RWPE1 (cell line): ENCODE measurements at regions of chr9 and their contacts with region 1.

Region 1: DNA sequence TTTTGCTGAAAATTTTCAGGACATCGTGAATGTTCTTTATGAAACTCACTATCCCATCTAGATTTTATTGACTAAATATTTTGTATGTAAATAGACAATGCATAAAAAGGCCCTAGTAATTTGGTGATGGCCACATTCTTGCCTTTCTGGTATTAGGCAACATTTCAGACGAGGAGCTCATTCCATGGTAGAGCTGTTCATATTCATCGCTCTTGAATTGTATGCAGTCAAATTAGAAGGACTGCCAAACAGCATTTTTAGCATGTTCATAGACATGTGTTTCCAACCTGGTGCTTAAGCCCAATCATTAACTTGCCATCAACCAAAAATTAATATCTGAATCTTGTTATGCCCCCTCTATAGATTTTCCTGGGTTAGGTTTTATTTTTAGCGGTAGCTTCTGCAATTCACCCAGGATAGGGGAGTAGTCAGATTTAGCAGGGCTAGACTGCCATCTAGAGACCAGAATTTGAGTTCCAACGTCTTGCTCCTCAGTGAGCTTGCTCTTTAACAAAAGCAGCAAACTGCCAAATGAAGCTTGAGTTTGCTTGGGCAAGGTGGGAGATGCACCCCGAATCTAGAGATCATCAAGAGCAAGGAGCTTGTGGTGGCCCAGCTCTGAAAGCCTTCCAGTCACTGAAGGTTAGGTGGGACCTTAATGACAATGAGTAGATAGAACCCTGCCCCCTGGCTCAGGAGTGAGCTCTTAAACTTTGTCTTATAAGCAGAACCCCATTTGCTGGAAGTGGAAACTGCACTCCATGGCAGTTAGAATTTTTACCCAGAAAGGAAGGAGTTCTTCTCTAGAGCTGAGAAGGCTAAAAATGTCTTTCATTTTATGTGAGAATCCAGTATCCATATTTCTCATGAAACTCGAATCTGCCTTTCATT is 456.2 kb downstream of the RASEF start:
- DNase-seq: peak; percentile 72
- H3K27ac ChIP-seq: no peak overlapping the region
- CTCF ChIP-seq: peak; percentile 60

Region 2: DNA sequence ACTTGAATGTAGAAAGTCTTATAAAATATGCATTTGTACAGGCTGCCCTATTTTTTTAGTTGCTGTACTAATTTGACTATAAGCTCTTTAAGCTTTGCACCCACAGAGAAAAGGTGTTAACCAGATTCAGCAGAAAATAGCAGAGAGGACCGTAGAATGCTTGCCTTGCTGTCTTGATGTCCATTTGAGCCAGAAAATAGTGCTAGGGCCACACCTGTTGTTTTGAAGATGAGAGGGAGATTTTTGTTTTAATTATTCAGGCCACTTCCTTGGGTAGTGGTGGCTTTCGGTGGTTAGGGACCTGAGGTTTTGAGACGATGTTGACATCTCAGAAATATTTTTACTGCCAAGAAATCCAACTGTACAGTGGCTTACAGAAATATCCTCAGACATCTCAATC is 422.2 kb before region 1 on chr9:
- CTCF ChIA-PET with region 1: no interaction called
- POLR2A ChIA-PET with region 1: no interaction called
- DNase-seq: no peak
- H3K27ac ChIP-seq: no peak overlapping the region
- CTCF ChIP-seq: no peak

Region 3: DNA sequence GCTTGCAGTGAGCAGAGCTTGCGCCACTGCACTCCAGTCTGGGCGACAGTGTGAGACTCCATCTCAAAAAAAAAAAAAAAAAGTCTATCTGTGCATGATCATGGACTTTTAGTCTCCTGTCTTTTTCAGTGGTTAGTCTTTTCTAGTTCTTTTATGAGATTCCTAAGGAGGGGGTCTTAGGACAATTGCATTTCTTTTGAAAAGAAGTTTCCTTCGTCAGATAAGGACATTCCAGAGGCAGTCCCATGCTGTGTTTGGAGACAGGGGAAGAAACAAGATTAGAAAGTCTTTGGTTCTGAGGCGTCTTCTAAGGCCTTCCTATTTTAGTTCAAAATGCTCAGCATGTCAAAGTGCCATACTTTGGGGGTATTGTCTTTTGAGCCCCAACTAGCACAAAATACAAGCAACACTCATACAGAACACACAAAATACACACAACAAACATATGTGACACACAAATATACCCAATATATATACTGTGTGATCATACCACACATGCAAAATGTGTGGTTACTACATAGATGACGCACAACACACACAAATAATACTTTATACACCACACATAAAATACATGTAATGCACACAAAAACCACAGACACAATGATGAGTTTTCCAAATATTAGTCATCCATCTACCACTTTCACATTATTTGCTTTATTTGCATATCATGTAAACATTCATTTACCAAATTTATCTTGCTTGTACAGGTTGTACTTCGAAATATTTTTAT is 223.7 kb before region 1 on chr9:
- CTCF ChIA-PET with region 1: no interaction called
- POLR2A ChIA-PET with region 1: no interaction called
- DNase-seq: no peak
- H3K27ac ChIP-seq: no peak overlapping the region
- CTCF ChIP-seq: no peak

Region 4: GRCh38 chr9:82532504-82533180 is 74.1 kb before region 1 on chr9:
- CTCF ChIA-PET with region 1: interaction called, 10 read pairs
- POLR2A ChIA-PET with region 1: no interaction called
- DNase-seq: peak; percentile 57
- H3K27ac ChIP-seq: no peak overlapping the region
- CTCF ChIP-seq: peak; percentile 58